AG04449 (cell line): ENCODE measurements at regions of chr5 and their contacts with region 1.

Region 1: GRCh38 chr5:132190161-132190817 is 37.4 kb downstream of the P4HA2 start:
- DNase-seq: peak; percentile 17
- H3K4me3 ChIP-seq: no peak overlapping the region
- CTCF ChIP-seq: peak; percentile 81

Region 2: GRCh38 chr5:132180134-132180745 is 10.0 kb before region 1 on chr5:
- CTCF ChIA-PET with region 1: interaction called, 43 read pairs
- POLR2A ChIA-PET with region 1: no interaction called
- DNase-seq: peak; percentile 19
- H3K4me3 ChIP-seq: no peak overlapping the region
- CTCF ChIP-seq: peak; percentile 61

Region 3: GRCh38 chr5:132215329-132215728 is 25.0 kb after region 1 on chr5:
- CTCF ChIA-PET with region 1: interaction called, 13 read pairs
- POLR2A ChIA-PET with region 1: no interaction called
- DNase-seq: peak; percentile 80
- H3K4me3 ChIP-seq: no peak overlapping the region
- CTCF ChIP-seq: no peak